ENCODE measurements at regions of chr18 and their contacts with region 1.

Region 1: GRCh38 chr18:62069556-62069955 is 117.3 kb downstream of the PIGN start:
- DNase-seq: no peak
- ATAC-seq: no peak

Region 2: DNA sequence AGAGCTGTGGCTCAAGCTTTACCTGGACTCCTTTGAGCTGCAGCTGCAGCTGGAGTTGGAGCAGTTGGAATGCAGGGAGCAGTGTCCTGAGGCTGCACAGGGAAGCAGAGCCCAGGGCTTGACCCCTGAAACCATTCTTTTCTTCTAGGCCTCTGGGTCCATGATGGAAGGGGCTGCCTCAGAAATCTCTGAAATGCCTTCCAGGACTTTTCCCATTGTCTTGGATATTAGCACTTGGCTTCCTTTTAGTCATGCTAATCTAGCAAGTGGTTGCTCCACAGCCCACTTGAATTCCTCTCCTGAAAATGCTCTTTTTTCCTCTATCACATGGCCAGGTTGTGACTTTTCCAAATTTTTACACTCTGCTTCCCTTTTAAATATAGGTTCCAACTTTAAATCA is 68.2 kb before region 1 on chr18:
- intact Hi-C with region 1: loop called in 1 of 2 experiments (anchors 10 kb)
- DNase-seq: no peak
- ATAC-seq: no peak

Region 3: DNA sequence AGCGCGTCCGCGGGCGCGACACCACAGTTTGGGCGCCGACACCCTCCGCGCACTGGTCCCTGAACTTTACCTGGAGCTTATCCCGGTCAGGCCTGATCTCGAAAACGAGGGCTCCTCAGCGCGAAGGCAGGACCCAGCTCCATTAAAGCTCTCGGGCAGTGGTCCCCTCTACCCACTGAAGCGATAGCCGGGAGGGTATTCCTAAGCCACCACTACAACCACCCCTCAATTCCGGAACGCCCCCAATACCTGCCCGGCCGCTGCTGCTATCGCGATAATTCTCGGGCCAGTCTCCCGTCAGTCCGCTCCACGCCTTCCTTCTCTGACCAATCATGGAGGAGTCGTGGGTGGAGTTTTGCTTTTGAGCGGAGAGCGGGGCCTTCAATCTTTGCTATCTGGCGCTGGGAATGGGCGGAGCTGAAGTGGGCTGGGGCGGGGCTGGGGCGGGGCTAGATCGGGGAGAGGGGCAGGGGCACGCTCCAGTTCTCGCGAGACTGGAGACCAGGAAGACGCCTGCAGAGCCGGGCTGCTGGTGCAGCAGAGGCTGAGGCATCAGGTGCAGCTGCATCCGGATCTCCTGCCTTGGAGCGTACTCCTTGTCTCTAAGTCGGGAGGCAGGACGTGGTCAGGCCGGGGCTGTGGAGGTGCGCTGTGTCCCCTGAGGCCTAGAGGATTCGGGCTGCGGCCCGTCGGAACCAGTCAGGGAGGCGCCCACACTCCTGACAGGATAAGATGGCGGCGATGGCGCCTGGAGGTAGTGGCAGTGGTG is 117.4 kb after region 1 on chr18 and contains the starts of genes PIGN and RELCH:
- intact Hi-C with region 1: no loop called
- DNase-seq: peak; percentile 95
- ATAC-seq: peak; percentile 99
- total RNA-seq, gene PIGN: 18.2 to 19.4 TPM
- total RNA-seq, gene RELCH: 14.7 to 14.8 TPM

Region 4: DNA sequence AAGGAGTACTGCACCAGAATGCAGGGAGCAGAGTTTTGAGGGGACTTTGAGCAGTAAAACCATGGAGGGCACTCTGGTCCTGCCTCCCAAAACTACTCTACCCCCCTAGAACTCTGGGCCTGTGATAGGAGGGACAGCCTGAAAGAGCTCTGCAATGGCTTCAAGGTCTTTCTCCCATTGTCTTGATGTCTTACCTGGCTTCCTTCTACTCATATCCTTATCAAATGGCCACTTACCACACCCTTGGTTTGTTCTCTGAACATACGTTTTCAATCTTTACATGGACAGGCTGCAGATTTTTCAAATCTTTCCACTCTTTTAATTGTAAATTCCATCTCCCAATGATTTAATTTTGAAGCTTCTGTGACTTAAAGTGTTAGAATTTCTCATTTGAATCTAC is 145.2 kb after region 1 on chr18:
- intact Hi-C with region 1: no loop called
- DNase-seq: no peak
- ATAC-seq: no peak

Region 5: GRCh38 chr18:62368100-62368499 is 298.5 kb after region 1 on chr18:
- intact Hi-C with region 1: no loop called
- DNase-seq: no peak
- ATAC-seq: no peak